Ovary (tissue), 10 donors: ENCODE measurements at regions of chr18 and their contacts with region 1.

Region 1: GRCh38 chr18:71529703-71530303 is 1014.3 kb downstream of the CBLN2 start:
- DNase-seq: no peak
- H3K4me3 ChIP-seq: no peak overlapping the region
- H3K27ac ChIP-seq: no peak overlapping the region
- H3K4me1 ChIP-seq: no peaks in the 10 kb centered on the region
- H3K27me3 ChIP-seq: no peaks in the 10 kb centered on the region
- CTCF ChIP-seq: no peak
- EP300 ChIP-seq: no peak
- POLR2A ChIP-seq: no peak

Region 2: DNA sequence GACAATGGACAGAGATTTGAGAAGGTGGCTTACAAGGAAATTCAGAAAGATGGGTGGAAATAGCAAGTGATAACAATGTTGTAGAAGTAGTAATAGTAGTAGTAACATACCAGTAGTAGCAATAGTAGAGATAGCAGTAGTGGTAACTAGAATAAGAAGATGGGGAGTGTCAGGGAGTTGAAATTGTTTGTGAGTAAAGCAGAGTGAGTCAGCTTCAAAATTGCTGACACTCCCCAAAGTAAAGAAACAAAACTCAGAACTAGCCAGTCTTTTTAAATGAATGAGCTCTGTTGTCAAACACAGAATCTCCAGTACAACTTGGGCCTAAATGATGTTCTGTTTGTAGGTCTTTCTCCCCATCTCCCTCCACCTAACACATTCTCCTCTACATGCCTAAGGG is 26.6 kb before region 1 on chr18:
- intact Hi-C with region 1: loop called in 1 of 4 experiments (anchors 2 kb)
- DNase-seq: no peak
- H3K4me3 ChIP-seq: no peak overlapping the region
- H3K27ac ChIP-seq: no peak overlapping the region
- H3K4me1 ChIP-seq: no peaks in the 10 kb centered on the region
- H3K27me3 ChIP-seq: no peaks in the 10 kb centered on the region
- CTCF ChIP-seq: no peak
- EP300 ChIP-seq: no peak
- POLR2A ChIP-seq: no peak